Kidney (tissue), 22 donors: ENCODE measurements at regions of chr16 and their contacts with region 1.

Region 1: GRCh38 chr16:11356573-11357331 is 11.5 kb downstream of the RMI2 start:
- DNase-seq: peak in 4 of 5 donors; percentile 71 to 88 (median 86)
- H3K4me3 ChIP-seq: no peak overlapping the region
- H3K27ac ChIP-seq: peak overlapping the region; percentile 1 to 85
- H3K4me1 ChIP-seq: peaks cover 9 to 15% (median 14%) of the 10 kb centered on the region in 3 donors
- H3K27me3 ChIP-seq: no peaks in the 10 kb centered on the region
- CTCF ChIP-seq: peak; percentile 52

Region 2: GRCh38 chr16:10964039-10964890 is 392.5 kb before region 1 on chr16:
- intact Hi-C with region 1: loop called (anchors 10 kb)
- DNase-seq: peak; percentile 86 to 92 (median 88)
- H3K4me3 ChIP-seq: no peak overlapping the region
- H3K27ac ChIP-seq: no peak overlapping the region
- H3K4me1 ChIP-seq: peaks cover 0 to 4% (median 3%) of the 10 kb centered on the region in 3 donors
- H3K27me3 ChIP-seq: no peaks in the 10 kb centered on the region
- CTCF ChIP-seq: peak; percentile 91